Esophagus muscularis mucosa (tissue), 4 donors: ENCODE measurements at regions of chr4 and their contacts with region 1.

Region 1: DNA sequence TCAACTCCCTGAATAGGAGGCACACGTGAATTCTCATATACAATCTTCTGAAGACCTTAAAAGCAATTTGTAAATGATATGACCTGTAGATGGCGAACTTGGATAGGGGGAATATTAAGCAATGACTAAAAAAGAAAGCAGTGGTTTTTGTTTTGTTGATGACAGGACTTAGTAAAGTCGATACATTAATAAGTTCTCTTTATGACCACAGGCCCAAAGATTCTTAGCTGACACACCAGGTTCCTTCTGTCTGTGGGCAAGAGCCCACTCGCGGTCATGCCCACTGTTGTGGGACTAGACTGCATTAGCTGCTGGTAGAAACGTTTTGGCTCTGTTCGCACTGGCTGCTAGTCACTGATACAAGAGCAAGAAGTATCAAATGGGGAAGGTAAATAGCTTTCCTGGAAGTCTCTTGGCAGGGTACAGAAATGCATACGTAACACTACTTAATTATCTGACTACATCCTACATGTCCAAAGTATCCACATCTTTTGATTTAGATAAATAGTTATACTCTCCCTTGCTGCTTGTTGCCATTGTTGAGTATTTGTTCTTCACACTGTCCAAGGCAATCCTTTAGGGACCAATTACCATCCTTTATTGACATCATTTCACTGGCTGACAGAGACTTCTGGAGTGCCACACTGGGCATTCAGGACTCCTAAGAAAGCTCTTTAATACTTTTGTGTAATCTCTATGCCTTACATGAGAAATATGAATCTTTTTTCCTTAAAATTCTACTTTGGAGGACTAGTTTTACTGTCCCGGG is 31.0 kb downstream of the ALPK1 start:
- DNase-seq: no peak
- H3K4me3 ChIP-seq: no peak overlapping the region
- H3K27ac ChIP-seq: no peak overlapping the region
- H3K4me1 ChIP-seq: no peaks in the 10 kb centered on the region
- H3K27me3 ChIP-seq: no peaks in the 10 kb centered on the region
- CTCF ChIP-seq: peak; percentile 25 to 43 (median 26)
- EP300 ChIP-seq: no peak
- POLR2A ChIP-seq: no peak

Region 2: DNA sequence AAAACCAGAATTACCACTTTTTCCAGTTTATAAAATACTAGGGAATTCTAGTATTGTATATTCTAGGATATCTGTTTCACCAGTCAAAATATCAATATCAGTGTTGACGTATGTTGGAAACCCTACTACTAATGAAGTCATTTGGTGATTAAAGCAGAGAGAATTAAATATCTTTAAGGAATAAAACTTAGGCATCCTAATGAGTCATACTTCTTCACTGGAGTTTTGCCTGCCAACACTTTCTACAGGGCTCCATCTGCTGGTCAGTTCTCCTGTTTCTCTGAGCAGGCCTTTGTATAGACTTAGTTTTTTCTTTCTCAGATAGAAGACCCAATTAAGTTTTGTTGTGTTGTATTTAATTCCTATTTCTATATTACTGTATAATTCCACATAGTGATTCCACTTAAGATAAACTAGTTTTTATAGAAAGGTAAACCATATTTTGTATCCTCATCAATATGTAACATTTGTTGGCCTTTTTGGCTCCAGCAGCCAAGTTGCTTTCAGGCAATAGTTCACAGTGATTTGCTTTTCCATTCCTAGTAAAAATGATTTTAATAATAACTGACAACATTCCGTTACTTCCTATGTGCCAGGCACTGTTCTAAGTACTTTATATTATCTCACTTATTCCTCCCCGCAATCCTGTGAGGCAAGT is 93.1 kb before region 1 on chr4:
- intact Hi-C with region 1: no loop called
- DNase-seq: no peak
- H3K4me3 ChIP-seq: no peak overlapping the region
- H3K27ac ChIP-seq: no peak overlapping the region
- H3K4me1 ChIP-seq: peaks cover 6 to 30% (median 23%) of the 10 kb centered on the region in 4 donors
- H3K27me3 ChIP-seq: no peaks in the 10 kb centered on the region
- CTCF ChIP-seq: peak; percentile 74 to 80 (median 75)
- EP300 ChIP-seq: no peak
- POLR2A ChIP-seq: no peak

Region 3: DNA sequence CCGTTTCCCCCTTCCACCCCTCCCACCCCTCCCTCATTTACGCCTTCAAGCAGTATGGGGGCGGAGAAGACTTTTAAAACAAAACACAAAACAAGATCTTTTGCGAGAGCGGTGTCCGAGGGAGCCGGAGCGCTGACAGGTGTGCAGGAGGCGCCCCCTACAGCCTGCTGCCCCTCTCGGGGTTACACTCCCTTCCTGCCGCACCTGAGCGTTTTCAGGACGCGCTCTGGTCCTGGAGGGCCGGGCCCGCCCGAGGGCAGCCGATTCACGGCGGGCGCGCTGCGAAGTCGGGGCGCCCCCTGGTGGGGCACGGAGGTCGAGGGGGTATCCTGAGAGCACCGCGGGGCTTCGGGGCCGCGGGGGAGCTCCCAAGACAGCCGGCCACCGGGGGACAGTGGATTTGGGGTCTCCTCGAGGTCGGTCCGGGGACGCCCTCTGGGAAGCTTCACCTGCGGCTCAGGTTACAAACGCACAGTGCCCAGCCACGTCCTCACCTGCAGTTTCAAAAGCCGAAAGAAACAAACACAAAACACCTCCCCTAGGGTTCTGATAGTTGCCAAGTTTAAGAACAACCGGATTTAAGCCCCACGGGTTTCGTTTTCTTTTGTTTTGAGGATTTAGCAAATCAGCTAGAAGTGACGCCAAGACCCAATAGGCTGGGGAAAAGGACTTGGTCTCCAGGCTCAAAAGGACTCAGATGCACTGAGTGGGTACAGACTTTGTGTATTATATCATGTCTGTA is 195.8 kb after region 1 on chr4:
- intact Hi-C with region 1: loop called (anchors 5 kb)
- DNase-seq: no peak
- H3K4me3 ChIP-seq: peak overlapping the region; percentile 36 to 54 (median 42)
- H3K27ac ChIP-seq: no peak overlapping the region
- H3K4me1 ChIP-seq: peaks cover 12 to 34% (median 27%) of the 10 kb centered on the region in 4 donors
- H3K27me3 ChIP-seq: peaks cover 0 to 69% (median 57%) of the 10 kb centered on the region in 4 donors
- CTCF ChIP-seq: peak; percentile 38 to 64 (median 51)
- EP300 ChIP-seq: no peak
- POLR2A ChIP-seq: no peak

Region 4: GRCh38 chr4:112604589-112604988 is 276.4 kb after region 1 on chr4:
- intact Hi-C with region 1: loop called (anchors 5 kb)
- DNase-seq: no peak
- H3K4me3 ChIP-seq: no peak overlapping the region
- H3K27ac ChIP-seq: no peak overlapping the region
- H3K4me1 ChIP-seq: no peaks in the 10 kb centered on the region
- H3K27me3 ChIP-seq: no peaks in the 10 kb centered on the region
- CTCF ChIP-seq: peak; percentile 46 to 64 (median 53)
- EP300 ChIP-seq: no peak
- POLR2A ChIP-seq: no peak